ENCODE measurements at regions of chr5 and their contacts with region 1.

Region 1: DNA sequence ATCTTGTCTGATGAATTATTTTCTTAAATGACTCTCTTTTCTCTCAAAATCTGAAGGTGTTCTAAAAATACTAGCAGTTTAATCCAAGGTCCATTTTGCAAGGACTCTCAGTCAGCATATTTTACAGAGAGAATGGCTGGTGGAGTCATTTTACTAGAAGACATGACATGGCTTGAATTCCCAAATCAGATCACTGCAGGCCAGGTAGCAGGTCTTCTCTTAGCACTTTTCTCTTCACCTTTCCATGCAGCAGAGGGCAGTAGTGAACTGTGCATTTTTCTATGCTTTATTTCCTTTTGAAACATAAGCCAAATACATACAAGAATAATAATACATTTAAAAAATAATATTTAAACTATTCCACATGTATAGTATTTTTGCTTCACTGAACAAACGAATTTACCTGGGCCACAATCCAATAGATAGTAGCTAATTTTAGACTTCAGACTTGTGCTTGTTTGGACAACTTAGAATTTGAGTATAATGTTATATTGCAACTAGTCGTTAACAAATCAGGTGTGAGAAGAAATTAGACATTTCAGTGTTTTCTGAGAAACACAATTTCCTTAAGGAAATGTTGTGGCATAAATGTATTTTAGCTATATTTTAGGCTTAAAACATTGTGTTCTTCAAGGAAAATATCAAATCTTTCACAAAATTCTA is 289.4 kb upstream of the DAB2 start:
- DNase-seq: peak; percentile 70
- H3K4me3 ChIP-seq: no peak overlapping the region
- H3K27ac ChIP-seq: no peak overlapping the region
- H3K4me1 ChIP-seq: peaks cover 15% of the 10 kb centered on the region; the same call in 1 of the 2 replicates
- H3K27me3 ChIP-seq: no peaks in the 10 kb centered on the region

Region 2: DNA sequence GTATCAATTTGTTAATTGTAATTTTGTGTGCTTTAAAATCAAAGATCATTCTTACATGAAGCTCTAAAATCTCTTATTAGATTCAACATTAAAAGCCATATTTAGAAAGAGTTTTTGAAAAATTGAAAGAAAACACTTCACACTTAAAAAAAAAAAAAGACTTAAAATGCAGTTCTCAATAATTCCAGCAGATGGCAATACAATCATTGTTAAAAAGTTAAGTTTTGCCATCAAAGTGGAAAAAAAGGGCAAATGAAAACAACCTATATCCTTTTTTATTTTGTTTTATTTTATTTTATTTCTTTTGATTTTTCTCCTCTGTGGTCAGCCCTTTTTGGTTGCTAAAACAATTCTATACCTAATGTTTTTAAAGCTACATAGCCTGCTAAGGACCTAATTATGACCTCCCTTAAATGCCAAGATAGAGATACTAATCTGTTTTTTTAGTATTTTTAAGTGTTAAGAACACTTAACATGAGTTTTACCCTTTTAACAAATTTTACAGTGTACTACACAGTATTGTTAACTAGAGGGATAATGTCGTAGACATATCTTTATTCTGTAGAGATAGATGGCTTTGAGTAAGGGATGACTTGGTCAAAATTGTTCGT is 135.2 kb before region 1 on chr5:
- in situ Hi-C with region 1: no loop called
- DNase-seq: peak; percentile 52
- H3K4me3 ChIP-seq: no peak overlapping the region
- H3K27ac ChIP-seq: no peak overlapping the region
- H3K4me1 ChIP-seq: peaks cover 15% of the 10 kb centered on the region
- H3K27me3 ChIP-seq: peaks cover 5% of the 10 kb centered on the region; the same call in 1 of the 2 replicates

Region 3: GRCh38 chr5:40165794-40166728 is 451.9 kb after region 1 on chr5:
- in situ Hi-C with region 1: no loop called
- DNase-seq: no peak
- H3K4me3 ChIP-seq: no peak overlapping the region
- H3K27ac ChIP-seq: no peak overlapping the region
- H3K4me1 ChIP-seq: no peaks in the 10 kb centered on the region
- H3K27me3 ChIP-seq: no peaks in the 10 kb centered on the region; the same call in 1 of the 2 replicates

Region 4: GRCh38 chr5:40688127-40688761 is 974.1 kb after region 1 on chr5:
- in situ Hi-C with region 1: loop called (anchors 10 kb)
- DNase-seq: peak; percentile 84
- H3K4me3 ChIP-seq: no peak overlapping the region
- H3K27ac ChIP-seq: no peak overlapping the region
- H3K4me1 ChIP-seq: peaks cover 16% of the 10 kb centered on the region
- H3K27me3 ChIP-seq: no peaks in the 10 kb centered on the region

Measured in GM23248 (cell line).